Heart left ventricle (tissue), 16 donors: ENCODE measurements at regions of chr10 and their contacts with region 1.

Region 1: GRCh38 chr10:77179015-77179695 is 458.5 kb downstream of the KCNMA1 start:
- DNase-seq: peak in 3 of 5 donors; percentile 19 to 64 (median 44)
- ATAC-seq: peak in 3 of 4 donors; percentile 42 to 71 (median 53)
- H3K4me3 ChIP-seq: no peak overlapping the region
- H3K27ac ChIP-seq: peak overlapping the region in 1 of 12 donors; percentile 74
- H3K4me1 ChIP-seq: peaks cover 0 to 14% (median 0%) of the 10 kb centered on the region in 12 donors
- H3K27me3 ChIP-seq: peaks cover 0 to 16% (median 0%) of the 10 kb centered on the region in 9 donors
- CTCF ChIP-seq: no peak
- POLR2A ChIP-seq: no peak

Region 2: DNA sequence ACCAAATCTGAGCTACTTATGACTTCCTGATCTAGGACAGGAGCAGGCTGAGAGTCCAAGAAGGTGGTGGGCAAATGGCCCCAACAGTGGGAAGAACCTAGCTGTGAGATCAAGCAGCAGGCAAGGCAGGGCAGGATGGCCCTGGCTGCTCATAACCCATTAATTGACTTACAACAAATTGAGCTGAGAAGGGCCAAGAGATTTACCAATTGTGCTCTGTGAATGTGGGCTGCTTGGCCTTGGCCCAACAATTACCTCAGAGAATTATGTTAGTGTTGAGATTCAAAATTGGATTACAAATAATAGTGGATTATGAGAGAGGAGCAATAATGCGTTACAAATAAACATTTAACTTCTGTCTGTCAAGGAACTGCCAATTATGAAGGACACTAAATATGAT is 498.0 kb before region 1 on chr10:
- intact Hi-C with region 1: no loop called
- DNase-seq: no peak
- ATAC-seq: no peak
- H3K4me3 ChIP-seq: no peak overlapping the region
- H3K27ac ChIP-seq: no peak overlapping the region
- H3K4me1 ChIP-seq: peaks cover 0 to 11% (median 0%) of the 10 kb centered on the region in 12 donors
- H3K27me3 ChIP-seq: no peaks in the 10 kb centered on the region
- CTCF ChIP-seq: no peak
- POLR2A ChIP-seq: no peak

Region 3: DNA sequence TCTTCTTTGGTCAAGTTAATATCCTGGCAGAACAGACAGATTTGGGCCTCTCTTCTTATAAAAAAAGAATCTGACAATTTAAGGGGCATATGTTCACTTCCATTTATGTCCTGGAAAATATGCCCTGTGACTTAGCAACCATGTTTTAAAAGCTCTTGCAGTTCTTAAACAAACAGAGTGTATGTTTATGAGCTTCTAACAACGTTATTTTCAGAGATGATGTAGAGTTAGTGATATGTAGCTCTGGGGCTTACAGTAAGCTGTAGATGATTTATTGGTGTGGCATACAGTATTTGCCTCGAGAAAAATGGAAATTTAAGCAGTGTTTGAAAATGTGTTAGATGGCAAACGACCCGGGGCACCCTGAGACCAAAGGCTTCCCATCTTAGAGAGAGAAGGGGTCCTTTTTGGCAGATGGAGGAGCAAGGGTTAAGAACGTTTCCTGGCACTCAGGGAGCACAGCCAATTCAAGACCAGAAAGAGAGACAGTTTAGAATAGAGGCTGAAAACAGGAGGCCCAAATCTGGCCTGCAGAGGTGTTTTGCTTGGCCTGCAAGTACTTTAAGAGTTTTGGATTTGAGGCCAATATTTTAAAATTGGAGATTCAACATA is 61.0 kb after region 1 on chr10:
- intact Hi-C with region 1: loop called in 1 of 10 experiments (anchors 5 kb)
- DNase-seq: no peak
- ATAC-seq: no peak
- H3K4me3 ChIP-seq: no peak overlapping the region
- H3K27ac ChIP-seq: peak overlapping the region in 2 of 12 donors; percentile 22 to 87
- H3K4me1 ChIP-seq: peaks cover 0 to 11% (median 3%) of the 10 kb centered on the region in 12 donors
- H3K27me3 ChIP-seq: no peaks in the 10 kb centered on the region
- CTCF ChIP-seq: no peak
- POLR2A ChIP-seq: no peak

Region 4: DNA sequence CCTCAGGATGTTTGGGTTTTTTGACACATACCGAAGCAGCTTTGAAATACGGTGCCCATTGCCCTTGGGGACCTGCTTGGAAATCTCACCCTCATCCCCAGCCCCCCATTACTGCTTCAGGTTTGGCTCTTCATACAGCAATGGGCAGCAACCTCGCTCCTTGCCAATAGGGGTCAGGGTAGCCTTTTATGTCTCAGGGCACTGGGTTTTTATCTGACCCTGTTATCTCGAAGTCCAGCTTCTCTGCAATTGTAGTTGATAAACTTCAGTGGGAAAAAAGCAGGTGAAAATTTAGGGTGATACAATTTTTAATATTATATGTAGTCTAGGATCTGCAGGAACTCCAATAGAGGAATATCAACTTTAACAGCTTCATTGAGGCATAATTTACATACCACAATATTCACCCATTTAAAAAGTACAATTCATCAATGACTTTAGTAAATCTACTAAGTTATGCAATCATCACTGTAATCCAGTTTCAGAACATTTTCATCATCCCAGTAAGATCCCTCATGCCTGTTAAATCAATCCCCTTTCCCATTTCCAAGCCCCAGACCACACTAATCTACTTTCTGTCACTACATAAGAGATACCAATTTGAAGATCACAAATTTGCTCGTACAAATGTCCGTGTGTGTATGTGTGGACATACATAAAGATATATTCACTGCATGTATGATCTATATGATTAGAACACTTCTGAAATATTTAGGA is 72.3 kb after region 1 on chr10:
- intact Hi-C with region 1: no loop called
- DNase-seq: no peak
- ATAC-seq: no peak
- H3K4me3 ChIP-seq: no peak overlapping the region
- H3K27ac ChIP-seq: peak overlapping the region in 1 of 12 donors; percentile 2
- H3K4me1 ChIP-seq: peaks cover 0 to 14% (median 0%) of the 10 kb centered on the region in 12 donors
- H3K27me3 ChIP-seq: peaks cover 0 to 12% (median 0%) of the 10 kb centered on the region in 9 donors
- CTCF ChIP-seq: peak in 8 of 12 donors; percentile 7 to 36 (median 24)
- POLR2A ChIP-seq: no peak

Region 5: DNA sequence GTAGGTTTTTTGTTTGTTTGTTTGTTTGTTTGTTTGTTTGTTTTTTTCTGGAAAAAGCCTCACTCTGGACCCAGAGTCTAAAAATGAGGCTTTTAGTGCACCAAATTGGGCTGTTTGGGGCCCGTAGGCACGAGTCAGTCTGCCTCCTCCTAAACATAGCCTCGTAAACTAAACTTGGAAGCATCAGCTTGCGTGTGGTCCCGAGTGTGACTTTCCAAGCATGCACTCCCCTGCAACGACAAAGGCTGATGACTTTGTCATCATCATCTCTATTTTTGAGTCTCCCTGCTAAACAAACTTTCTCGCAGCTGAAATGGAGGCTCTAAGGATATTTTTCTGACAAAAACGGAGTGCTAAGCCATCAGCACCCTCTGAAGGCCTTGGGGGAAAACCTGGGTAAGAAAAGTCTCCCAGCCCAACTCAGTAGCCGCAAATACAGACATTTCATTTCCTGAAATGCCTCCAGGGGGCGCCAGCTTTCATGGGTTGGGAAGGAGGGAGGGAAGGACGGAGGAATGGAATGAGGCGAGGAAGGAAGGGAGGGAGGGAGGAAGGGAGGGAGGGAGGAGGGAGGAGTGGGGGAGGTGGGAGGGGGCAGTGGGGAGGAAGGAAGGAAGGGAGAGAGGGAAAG is 212.6 kb after region 1 on chr10:
- intact Hi-C with region 1: loop called in 9 of 10 experiments (anchors 2 to 10 kb)
- DNase-seq: peak; percentile 54 to 75 (median 66)
- ATAC-seq: peak in 3 of 4 donors; percentile 62 to 81 (median 72)
- H3K4me3 ChIP-seq: no peak overlapping the region
- H3K27ac ChIP-seq: peak overlapping the region in 1 of 12 donors; percentile 70
- H3K4me1 ChIP-seq: peaks cover 0 to 24% (median 10%) of the 10 kb centered on the region in 12 donors
- H3K27me3 ChIP-seq: peaks cover 0 to 4% (median 0%) of the 10 kb centered on the region in 9 donors
- CTCF ChIP-seq: peak; percentile 31 to 64 (median 48)
- POLR2A ChIP-seq: no peak